ENCODE measurements at regions of chr17 and their contacts with region 1.

Region 1: GRCh38 chr17:50865984-50866774 is at the start of gene TOB1:
- H3K4me3 ChIP-seq: peak within 1 kb of the TSS; percentile 86
- H3K27ac ChIP-seq: peak within 1 kb of the TSS; percentile 99
- H3K4me1 ChIP-seq: peaks cover 33% of the 10 kb centered on the region
- CTCF ChIP-seq: no peak

Region 2: GRCh38 chr17:50397111-50397918 is 468.9 kb before region 1 on chr17 and contains the start of gene LRRC59:
- CTCF ChIA-PET with region 1: no interaction called
- POLR2A ChIA-PET with region 1: interaction called, 10 read pairs
- H3K4me3 ChIP-seq: peak within 1 kb of the TSS; percentile 74
- H3K27ac ChIP-seq: peak within 1 kb of the TSS; percentile 81
- H3K4me1 ChIP-seq: peaks cover 9% of the 10 kb centered on the region
- CTCF ChIP-seq: peak; percentile 100

Region 3: GRCh38 chr17:50877838-50878237 is 11.7 kb after region 1 on chr17:
- CTCF ChIA-PET with region 1: interaction called, 7 read pairs
- POLR2A ChIA-PET with region 1: interaction called, 20 read pairs
- H3K4me3 ChIP-seq: no peak overlapping the region
- H3K27ac ChIP-seq: no peak overlapping the region
- H3K4me1 ChIP-seq: no peaks in the 10 kb centered on the region
- CTCF ChIP-seq: no peak

Region 4: GRCh38 chr17:50904521-50905459 is 38.6 kb after region 1 on chr17:
- CTCF ChIA-PET with region 1: interaction called, 5 read pairs
- POLR2A ChIA-PET with region 1: interaction called, 24 read pairs
- H3K4me3 ChIP-seq: no peak overlapping the region
- H3K27ac ChIP-seq: peak overlapping the region; percentile 37
- H3K4me1 ChIP-seq: peaks cover 19% of the 10 kb centered on the region
- CTCF ChIP-seq: peak; percentile 25; the same call in 1 of the 2 replicates

Region 5: GRCh38 chr17:50931144-50931908 is 65.1 kb after region 1 on chr17:
- CTCF ChIA-PET with region 1: interaction called, 3 read pairs
- POLR2A ChIA-PET with region 1: interaction called, 54 read pairs
- H3K4me3 ChIP-seq: peak overlapping the region; percentile 24
- H3K27ac ChIP-seq: peak overlapping the region; percentile 52
- H3K4me1 ChIP-seq: peaks cover 6% of the 10 kb centered on the region; the same call in 1 of the 2 replicates
- CTCF ChIP-seq: no peak

Region 6: DNA sequence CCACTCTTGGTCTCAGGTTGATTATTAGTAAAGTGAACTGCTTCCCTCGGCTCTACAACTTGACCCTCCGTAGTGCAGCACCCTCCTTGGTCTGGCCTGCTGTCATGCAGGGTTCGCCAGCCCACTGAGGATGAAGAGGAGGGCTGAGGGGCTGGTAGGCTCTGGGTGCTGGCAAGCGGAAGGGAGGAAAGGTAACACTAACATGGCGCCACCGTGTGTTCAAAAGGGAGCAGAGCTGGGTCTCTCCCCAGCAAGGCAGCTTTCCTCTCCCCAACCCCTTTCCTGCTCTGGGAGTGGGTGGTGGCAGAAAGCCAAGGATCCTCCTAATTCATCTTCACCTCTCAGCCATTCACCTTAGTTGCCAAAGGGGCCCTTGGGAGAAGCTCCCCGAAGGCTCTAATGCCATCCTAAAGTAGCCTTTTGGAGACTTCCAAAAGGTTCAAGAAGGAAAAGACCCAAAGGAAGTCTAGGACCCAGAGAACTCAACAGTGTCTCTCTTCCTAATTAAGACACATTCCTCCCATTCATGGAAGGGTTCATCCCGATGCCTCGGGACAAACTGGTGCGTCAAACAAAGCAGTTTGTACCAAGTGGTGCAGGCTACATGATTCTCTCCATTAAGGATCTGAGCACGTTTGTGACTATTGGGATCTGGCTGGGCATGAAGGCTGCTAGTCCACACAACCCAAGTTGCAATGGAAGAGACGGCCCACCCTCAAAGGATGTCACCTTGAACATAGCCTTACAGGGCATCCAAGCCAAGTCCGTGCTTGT is 90.8 kb after region 1 on chr17:
- CTCF ChIA-PET with region 1: interaction called, 78 read pairs
- POLR2A ChIA-PET with region 1: interaction called, 106 read pairs
- H3K4me3 ChIP-seq: no peak overlapping the region
- H3K27ac ChIP-seq: no peak overlapping the region
- H3K4me1 ChIP-seq: no peaks in the 10 kb centered on the region; the same call in 1 of the 2 replicates
- CTCF ChIP-seq: peak; percentile 80

Region 7: GRCh38 chr17:51153210-51154072 is 287.3 kb after region 1 on chr17 and contains the start of gene NME1:
- CTCF ChIA-PET with region 1: interaction called, 3 read pairs
- POLR2A ChIA-PET with region 1: interaction called, 11 read pairs
- H3K4me3 ChIP-seq: peak within 1 kb of the TSS; percentile 72
- H3K27ac ChIP-seq: peak within 1 kb of the TSS; percentile 76
- H3K4me1 ChIP-seq: peaks cover 4% of the 10 kb centered on the region; the same call in 1 of the 2 replicates
- CTCF ChIP-seq: peak; percentile 91

Region 8: DNA sequence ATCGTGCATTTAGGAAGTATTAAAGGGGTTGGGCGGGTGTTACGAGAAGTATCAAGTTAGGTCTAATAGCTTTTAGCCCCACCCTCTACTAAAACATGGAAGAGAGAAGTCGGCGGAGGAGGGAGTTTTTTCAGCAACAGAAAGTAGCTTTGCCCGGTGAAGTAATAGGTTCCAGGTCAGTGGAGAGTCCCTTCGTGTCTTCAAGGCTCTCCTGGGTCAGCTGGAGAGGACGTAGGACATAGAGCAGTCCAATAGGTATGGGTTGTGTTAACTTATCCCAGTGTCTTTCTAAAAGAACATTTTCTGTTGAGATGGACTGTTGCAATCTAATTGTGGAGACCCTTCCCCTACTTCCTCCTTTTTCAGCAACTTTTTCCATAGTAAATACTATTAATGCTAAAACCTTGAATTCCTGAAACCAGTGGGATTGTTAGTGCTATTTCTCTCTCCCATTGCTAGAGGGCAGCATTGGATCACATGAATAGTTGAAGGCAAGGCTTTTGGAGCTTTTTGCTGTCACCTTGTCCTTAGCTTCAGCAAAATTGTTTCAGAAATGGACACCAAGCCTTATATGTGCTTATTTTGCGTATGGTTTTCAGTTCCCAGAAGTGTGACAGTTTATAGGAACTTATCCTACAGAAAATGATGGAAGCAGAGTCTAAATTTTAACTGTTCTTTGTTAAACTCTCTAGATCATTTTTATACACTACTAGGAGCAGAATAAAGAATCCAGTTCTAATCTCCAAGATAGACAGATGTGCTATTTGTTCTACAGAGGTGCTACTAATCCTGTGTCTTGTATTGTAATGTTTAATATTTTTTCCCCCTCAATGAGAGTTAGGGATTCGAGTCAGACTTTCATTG is 432.6 kb after region 1 on chr17:
- CTCF ChIA-PET with region 1: no interaction called
- POLR2A ChIA-PET with region 1: no interaction called
- H3K4me3 ChIP-seq: no peak overlapping the region
- H3K27ac ChIP-seq: no peak overlapping the region
- H3K4me1 ChIP-seq: no peaks in the 10 kb centered on the region
- CTCF ChIP-seq: peak; percentile 53; the same call in 1 of the 2 replicates